Activated CD8-positive, alpha-beta memory T cell treated with anti-CD3 and anti-CD28 coated beads, Interleukin-2, amount 10 ng/mL, durations not matched to agents 7 days and 5 days (primary cell): ENCODE measurements at regions of chr11 and their contacts with region 1.

Region 1: DNA sequence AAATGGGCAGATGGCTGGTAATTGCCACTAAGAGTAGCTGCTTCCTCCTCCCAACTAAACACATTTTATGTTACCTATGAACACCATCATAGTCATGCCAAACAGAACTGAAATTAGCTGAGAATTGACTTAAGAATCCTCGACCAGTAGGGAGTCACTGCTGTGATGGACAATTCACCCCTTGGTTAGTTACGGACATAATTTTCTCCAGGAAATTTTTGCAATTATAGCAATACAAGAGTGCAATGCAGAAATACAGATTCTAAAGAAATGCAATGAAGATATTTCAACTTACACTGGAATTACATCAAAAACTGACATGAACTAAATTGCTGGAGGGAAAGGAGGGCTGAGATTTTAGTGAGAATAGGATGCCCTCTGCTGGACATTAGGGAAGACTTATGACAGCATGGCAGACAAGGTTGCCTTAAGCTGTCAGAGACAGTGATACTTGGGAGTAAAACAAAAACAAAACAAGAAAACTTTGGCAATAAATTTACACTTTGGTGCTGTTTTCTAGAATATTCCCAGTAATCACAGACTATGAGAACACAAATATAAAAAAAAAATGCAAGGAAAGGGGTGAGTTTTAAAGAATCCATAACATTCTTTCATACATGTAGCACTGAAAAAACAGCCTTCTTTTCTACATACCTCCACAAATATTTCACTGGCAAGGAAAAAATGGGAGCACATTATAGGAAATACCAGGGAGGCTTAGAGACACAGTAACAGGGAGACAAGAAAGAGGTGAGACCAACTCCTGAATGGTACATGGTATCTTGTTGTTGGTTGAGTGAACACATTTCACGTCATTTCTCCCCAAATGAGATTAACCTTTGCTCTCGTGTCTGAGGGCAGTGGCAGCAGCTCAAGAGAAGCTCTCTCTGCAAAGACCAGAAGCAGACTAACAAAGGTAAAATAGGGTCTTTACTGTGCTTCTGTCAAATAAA is 11.2 kb upstream of the PPP2R1B start:
- DNase-seq: peak; percentile 45
- ATAC-seq: peak; percentile 91
- H3K4me3 Mint-ChIP-seq: no peak overlapping the region
- H3K27ac Mint-ChIP-seq: no peak overlapping the region
- H3K4me1 Mint-ChIP-seq: no peaks in the 10 kb centered on the region
- H3K27me3 Mint-ChIP-seq: no peaks in the 10 kb centered on the region

Region 2: GRCh38 chr11:111586388-111586831 is 191.0 kb before region 1 on chr11:
- CTCF ChIA-PET with region 1: interaction called, 57 read pairs
- DNase-seq: peak; percentile 54
- ATAC-seq: peak; percentile 72
- H3K4me3 Mint-ChIP-seq: no peak overlapping the region
- H3K27ac Mint-ChIP-seq: no peak overlapping the region
- H3K4me1 Mint-ChIP-seq: peaks cover 8% of the 10 kb centered on the region
- H3K27me3 Mint-ChIP-seq: no peaks in the 10 kb centered on the region

Region 3: DNA sequence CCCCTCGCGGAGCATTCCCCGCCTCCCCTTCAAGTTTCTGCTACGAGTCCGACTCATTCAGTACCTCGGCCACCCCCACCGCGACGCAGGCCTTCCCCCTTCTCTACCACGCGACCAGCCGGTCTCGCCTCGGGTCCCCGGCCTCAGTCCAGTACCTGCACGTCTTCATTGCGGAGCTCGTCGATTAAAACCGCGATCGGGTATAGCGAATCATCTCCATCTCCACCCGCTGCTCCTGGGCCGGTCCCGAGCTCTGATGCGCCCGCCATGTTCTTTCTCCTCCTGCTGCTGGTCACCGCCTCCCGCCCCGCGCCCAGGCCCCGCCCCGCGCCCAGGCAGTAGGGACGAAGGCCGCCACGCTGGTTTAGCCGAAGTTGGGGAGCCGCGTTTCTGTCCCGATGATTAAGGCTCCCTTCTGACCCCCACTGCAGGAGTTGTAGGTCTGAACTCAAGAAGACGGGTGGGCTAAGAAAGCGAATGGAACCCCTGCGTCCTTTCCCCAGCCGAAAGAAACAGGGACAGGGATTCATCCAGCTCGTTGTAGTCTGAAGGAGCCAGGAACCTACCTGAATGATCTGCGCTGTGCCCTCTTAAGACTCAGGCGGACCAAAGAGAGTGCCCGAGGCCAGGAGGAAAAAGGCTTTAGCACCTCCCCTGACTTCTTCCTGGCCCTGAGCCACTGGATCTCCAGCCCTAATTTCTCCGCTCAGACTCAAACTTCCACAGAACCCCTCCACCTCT is 11.1 kb before region 1 on chr11 and contains the start of gene PPP2R1B:
- CTCF ChIA-PET with region 1: interaction called, 50 read pairs
- DNase-seq: peak; percentile 81
- ATAC-seq: peak; percentile 97
- H3K4me3 Mint-ChIP-seq: peak within 1 kb of the TSS; percentile 91
- H3K27ac Mint-ChIP-seq: peak within 1 kb of the TSS; percentile 99
- H3K4me1 Mint-ChIP-seq: peaks cover 35% of the 10 kb centered on the region
- H3K27me3 Mint-ChIP-seq: no peaks in the 10 kb centered on the region
- total RNA-seq, gene PPP2R1B: 55.2 to 64.9 TPM

Region 4: DNA sequence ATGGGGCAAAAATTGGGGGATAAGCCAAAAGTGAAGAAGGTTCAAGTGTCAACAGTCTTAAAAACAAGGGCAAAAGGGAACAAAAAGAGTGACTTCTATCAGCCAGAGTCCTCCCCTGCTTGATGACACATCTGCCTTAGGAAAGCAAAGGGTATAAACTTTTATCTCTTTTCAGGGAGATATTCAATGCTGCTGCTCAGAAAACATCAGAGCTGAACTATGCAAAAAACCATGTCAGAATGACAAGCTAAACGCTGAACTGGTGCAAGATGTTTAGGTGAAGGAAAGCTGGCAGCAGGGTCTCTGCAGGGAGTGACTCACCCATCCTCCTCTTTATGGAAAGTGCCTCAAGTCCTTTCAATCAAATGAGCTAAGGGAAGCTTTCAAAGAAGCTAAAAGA is 69.3 kb after region 1 on chr11:
- CTCF ChIA-PET with region 1: interaction called, 11 read pairs
- DNase-seq: no peak
- ATAC-seq: no peak
- H3K4me3 Mint-ChIP-seq: no peak overlapping the region
- H3K27ac Mint-ChIP-seq: no peak overlapping the region
- H3K4me1 Mint-ChIP-seq: no peaks in the 10 kb centered on the region
- H3K27me3 Mint-ChIP-seq: no peaks in the 10 kb centered on the region

Region 5: DNA sequence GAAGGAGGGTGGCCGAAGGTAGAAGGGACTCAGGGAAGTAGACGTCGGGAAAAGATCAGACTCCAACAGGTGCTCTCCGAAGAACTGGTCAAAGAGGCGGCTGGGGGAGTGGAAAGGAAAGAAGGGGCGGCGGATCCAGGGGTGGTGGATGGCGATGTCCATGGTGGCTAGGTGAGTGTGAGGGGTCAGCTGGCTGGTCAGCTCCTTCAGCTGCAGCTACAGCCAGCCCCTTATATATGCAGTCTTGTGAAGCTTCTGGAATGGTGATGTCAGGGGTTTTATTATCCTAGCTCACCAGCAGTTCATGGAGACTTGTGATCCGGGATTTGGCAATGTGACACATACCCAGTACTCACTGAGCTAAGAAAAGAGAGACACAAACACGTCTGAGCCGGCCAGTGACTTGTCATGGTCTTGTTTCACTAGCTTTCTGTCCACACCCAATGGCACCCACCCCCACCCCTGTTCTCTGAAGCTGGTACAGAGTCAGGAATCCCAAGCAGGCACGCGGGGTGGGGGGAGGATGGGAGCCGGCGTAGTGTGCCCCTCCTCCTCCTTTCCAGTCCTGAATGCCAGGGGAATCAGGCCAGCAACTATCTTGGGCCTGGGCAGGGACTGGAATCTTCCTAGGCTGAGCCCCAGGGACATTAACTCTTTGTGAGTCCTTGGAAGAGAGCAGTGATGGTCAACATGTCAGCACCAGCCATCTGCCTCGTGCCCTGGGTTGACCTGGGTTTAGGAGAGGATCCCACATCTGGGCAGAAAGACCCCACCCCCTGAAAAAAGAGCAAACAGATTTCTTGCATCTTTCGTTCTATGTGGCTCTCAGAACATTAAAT is 134.4 kb after region 1 on chr11 and contains the start of gene CRYAB:
- CTCF ChIA-PET with region 1: no interaction called
- DNase-seq: no peak
- ATAC-seq: no peak
- H3K4me3 Mint-ChIP-seq: no peak within 1 kb of the TSS
- H3K27ac Mint-ChIP-seq: no peak within 1 kb of the TSS
- H3K4me1 Mint-ChIP-seq: no peaks in the 10 kb centered on the region
- H3K27me3 Mint-ChIP-seq: peaks cover 66% of the 10 kb centered on the region
- total RNA-seq, gene CRYAB: not detected